ENCODE measurements at regions of chr11 and their contacts with region 1.

Region 1: GRCh38 chr11:64284048-64284961 is at the start of gene BAD:
- DNase-seq: peak; percentile 95
- H3K4me3 Mint-ChIP-seq: peak within 1 kb of the TSS; percentile 82
- H3K27ac Mint-ChIP-seq: peak within 1 kb of the TSS; percentile 91
- H3K4me1 Mint-ChIP-seq: peaks cover 30% of the 10 kb centered on the region
- H3K27me3 Mint-ChIP-seq: peaks cover 1% of the 10 kb centered on the region
- total RNA-seq, gene BAD: 32.0 to 34.2 TPM

Region 2: DNA sequence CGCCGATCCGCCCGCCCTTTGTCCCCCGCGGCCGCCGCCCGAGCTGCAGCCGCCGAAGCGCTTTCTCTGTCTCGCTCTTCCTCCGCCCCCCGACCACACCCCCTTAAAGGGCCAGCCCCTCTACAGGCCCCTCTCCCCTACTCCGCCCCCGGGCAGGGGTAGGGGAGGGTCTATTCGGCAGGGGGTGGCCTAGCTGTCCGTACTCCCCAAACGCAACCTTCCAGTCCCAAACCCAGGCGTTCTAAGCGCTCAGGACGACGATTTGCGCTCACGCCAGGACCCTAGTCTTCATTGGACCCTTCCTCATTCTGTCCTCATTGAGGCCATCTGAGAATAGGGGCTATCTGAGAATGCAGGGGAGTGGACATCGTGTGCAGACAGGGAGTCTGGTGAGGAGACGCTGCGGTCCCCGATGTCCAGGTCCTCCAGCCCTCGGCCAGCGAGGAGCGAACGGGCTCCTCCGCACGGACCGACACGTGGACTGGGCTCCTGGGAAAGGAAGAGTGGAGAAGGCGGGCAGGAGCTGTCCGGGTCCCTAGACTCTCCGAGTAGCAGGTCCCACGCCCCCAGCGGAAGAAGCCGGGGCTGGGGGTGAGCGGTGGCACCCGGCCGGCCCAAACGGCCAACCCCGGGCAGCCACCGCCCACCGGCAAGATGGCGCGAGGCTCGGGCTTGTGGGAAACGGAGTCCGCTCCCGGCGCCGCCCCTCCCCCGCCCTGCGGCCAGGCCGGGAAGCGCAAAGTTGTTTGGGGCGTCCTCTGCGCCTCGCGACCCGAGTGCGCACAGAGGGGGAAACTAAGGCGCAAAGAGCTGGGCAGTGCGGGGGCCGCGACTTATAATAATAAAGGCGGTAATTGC is 37.2 kb before region 1 on chr11 and contains the start of gene PPP1R14B:
- CTCF ChIA-PET with region 1: interaction called, 16 read pairs
- POLR2A ChIA-PET with region 1: interaction called, 3 read pairs
- DNase-seq: peak; percentile 82
- H3K4me3 Mint-ChIP-seq: peak within 1 kb of the TSS; percentile 81
- H3K27ac Mint-ChIP-seq: peak within 1 kb of the TSS; percentile 87
- H3K4me1 Mint-ChIP-seq: peaks cover 48% of the 10 kb centered on the region
- H3K27me3 Mint-ChIP-seq: no peaks in the 10 kb centered on the region
- total RNA-seq, gene PPP1R14B: 81.1 to 86.0 TPM

Region 3: DNA sequence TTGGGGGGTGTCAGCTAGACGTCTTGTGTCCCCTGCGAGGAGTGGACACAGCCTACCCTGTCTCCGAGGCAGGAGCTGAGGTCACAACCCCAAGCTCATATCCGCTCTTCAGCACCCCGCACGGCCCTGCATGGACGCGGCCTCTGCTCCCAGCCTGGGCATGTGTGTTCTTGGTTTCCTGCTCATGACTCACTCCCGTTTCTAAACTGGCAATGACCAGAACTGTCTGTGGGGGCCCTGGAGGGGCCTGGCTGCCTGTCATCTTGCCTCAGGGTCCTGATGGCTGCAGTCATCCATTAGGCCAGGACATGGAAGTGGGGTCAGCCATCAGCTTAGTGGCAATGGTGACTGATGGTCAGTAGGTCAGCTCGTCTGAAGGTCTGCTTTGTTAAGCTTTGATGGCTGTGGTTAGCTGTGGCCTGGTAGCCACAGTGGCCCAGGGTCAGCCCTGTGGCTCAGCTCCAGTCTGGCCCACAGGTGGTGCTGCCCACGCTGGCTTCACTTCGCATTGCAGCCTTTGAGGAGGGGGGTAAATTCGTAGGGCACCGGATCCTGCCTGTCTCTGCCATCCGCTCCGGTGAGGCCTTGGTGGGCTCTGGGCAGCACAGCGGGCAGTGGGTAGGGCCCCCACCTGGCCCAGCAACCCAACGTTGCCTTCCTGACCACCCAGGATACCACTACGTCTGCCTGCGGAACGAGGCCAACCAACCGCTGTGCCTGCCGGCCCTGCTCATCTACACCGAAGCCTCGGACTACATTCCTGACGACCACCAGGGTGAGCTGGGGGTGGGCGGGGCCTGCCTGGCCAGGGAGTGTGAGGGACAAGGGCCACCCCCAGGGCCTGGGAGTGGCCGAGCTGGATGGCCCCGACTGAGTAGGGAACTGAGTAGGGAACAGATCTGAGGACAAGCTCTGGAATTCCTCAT is 21.0 kb before region 1 on chr11:
- CTCF ChIA-PET with region 1: no interaction called
- POLR2A ChIA-PET with region 1: no interaction called
- DNase-seq: no peak
- H3K4me3 Mint-ChIP-seq: no peak overlapping the region
- H3K27ac Mint-ChIP-seq: no peak overlapping the region
- H3K4me1 Mint-ChIP-seq: peaks cover 17% of the 10 kb centered on the region
- H3K27me3 Mint-ChIP-seq: no peaks in the 10 kb centered on the region

Region 4: DNA sequence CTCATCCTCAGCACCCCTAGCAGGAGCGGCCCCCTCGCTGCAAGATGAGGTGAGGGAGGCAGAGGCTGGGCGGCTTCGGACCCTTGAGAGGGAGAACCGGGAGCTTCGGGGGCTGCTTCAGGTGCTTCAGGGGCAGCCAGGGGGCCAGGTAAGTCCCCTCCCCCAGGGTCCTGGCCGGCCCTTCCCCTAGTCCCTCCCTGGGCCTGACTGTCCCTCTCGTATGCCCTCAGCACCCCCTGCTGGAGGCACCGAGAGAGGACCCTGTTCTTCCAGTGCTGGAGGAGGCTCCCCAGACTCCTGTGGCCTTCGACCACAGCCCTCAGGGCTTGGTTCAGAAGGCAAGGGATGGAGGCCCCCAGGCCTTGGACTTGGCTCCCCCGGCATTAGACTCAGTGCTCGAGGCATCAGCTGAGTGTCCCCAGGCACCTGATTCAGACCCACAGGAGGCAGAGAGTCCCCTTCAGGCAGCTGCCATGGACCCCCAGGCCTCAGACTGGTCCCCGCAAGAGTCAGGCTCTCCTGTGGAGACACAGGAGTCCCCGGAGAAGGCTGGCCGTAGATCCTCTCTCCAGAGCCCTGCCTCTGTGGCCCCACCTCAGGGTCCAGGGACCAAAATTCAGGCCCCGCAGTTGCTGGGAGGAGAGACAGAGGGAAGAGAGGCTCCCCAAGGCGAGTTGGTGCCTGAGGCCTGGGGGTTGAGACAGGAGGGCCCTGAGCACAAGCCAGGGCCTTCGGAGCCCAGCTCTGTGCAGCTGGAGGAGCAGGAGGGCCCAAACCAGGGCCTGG is 59.7 kb after region 1 on chr11:
- CTCF ChIA-PET with region 1: no interaction called
- POLR2A ChIA-PET with region 1: no interaction called
- DNase-seq: no peak
- H3K4me3 Mint-ChIP-seq: no peak overlapping the region
- H3K27ac Mint-ChIP-seq: no peak overlapping the region
- H3K4me1 Mint-ChIP-seq: peaks cover 36% of the 10 kb centered on the region
- H3K27me3 Mint-ChIP-seq: no peaks in the 10 kb centered on the region

Measured in activated CD4-positive, alpha-beta T cell treated with anti-CD3 and anti-CD28 coated beads, Interleukin-2, amount 10 ng/mL, durations not matched to agents 7 days and 5 days (primary cell).